H1 (cell line): ENCODE measurements at regions of chr5 and their contacts with region 1.

Region 1: DNA sequence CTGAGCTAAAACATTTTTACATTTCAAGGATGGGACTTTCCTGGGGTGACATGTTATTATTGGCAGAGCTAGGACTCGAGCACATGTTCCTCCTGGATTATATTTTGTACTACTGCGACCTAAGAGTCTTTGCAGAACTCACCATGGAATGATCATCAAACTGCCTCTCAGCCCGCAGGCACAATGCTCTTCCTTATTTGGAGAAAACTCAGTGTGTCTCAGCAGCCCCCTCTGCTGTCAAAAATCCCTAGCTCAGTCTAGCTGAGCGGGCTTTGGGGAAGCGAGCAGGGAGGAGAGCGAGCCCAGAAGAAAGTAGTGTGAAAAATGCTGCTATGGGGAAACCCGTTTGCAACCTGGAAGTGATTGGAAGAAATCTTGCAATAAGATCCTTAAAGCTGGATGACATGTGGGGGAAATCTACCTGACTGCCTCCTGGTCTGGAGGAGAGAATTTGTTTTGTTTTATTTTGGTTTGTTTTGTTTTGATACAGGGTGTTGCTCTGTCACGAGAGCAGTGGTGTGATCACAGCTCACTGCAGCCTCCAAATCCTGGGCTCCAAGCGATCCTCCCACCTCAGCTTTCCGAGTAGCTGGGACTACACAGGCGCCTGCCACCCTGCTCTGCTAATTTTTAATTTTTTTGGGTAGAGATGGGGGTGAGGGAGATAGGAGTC is 89.9 kb upstream of the CLINT1 start:
- DNase-seq: peak; percentile 85 to 93
- H3K4me3 ChIP-seq: no peak overlapping the region
- H3K27ac ChIP-seq: no peak overlapping the region; the same call in 1 of the 2 replicates
- H3K4me1 ChIP-seq: peaks cover 0 to 4% (median 1%) of the 10 kb centered on the region in 4 experiments; a peak in 4 of 7 replicates
- H3K27me3 ChIP-seq: no peaks in the 10 kb centered on the region
- CTCF ChIP-seq: peak; percentile 73 to 92 (median 78)
- EP300 ChIP-seq: peak in 1 of 2 experiments; percentile 90; a peak in 1 of 3 replicates
- POLR2A ChIP-seq: peak in 1 of 2 experiments; percentile 62; a peak in 2 of 3 replicates
- RAD21 ChIP-seq: peak; percentile 70 to 75

Region 2: GRCh38 chr5:157820593-157821252 is 128.2 kb before region 1 on chr5:
- CTCF ChIA-PET with region 1: interaction called, 13 read pairs
- POLR2A ChIA-PET with region 1: interaction called, 3 read pairs
- DNase-seq: no peak
- H3K4me3 ChIP-seq: no peak overlapping the region
- H3K27ac ChIP-seq: no peak overlapping the region
- H3K4me1 ChIP-seq: peaks cover 0 to 2% (median 0%) of the 10 kb centered on the region in 4 experiments; a peak in 2 of 7 replicates
- H3K27me3 ChIP-seq: no peaks in the 10 kb centered on the region
- CTCF ChIP-seq: peak in 2 of 3 experiments; percentile 7 to 35; a peak in 2 of 4 replicates
- EP300 ChIP-seq: no peak
- POLR2A ChIP-seq: no peak
- RAD21 ChIP-seq: peak; percentile 26 to 31; a peak in 3 of 4 replicates

Region 3: GRCh38 chr5:157917899-157918809 is 30.7 kb before region 1 on chr5:
- CTCF ChIA-PET with region 1: interaction called, 72 read pairs
- POLR2A ChIA-PET with region 1: no interaction called
- DNase-seq: peak; percentile 50 to 75
- H3K4me3 ChIP-seq: no peak overlapping the region
- H3K27ac ChIP-seq: no peak overlapping the region
- H3K4me1 ChIP-seq: peaks cover 0 to 10% (median 6%) of the 10 kb centered on the region in 4 experiments; a peak in 6 of 7 replicates
- H3K27me3 ChIP-seq: no peaks in the 10 kb centered on the region
- CTCF ChIP-seq: peak; percentile 57 to 83 (median 74)
- EP300 ChIP-seq: no peak
- POLR2A ChIP-seq: no peak
- RAD21 ChIP-seq: peak; percentile 73 to 80

Region 4: DNA sequence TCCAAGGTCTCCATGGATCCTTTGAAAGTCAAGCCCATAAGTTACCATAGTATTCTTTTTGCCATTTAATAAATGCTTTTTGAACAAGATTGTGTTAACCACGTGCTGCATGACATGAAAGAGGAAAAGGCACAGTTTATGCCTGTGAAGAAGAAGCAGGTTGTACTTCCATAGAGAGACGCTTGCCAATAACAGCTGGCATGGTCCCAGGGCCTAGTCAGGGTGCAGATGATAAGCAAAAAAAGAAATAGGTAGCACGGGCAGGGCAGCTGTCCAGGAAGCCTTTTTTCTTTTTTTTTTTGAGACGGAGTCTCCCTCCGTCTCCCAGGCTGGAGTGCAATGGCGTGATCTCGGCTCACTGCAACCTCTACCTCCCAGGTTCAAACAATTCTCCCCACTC is 18.2 kb before region 1 on chr5:
- CTCF ChIA-PET with region 1: interaction called, 25 read pairs
- POLR2A ChIA-PET with region 1: no interaction called
- DNase-seq: no peak
- H3K4me3 ChIP-seq: no peak overlapping the region
- H3K27ac ChIP-seq: no peak overlapping the region
- H3K4me1 ChIP-seq: peaks cover 2 to 10% (median 7%) of the 10 kb centered on the region in 4 experiments; a peak in 5 of 7 replicates
- H3K27me3 ChIP-seq: no peaks in the 10 kb centered on the region
- CTCF ChIP-seq: no peak
- EP300 ChIP-seq: no peak
- POLR2A ChIP-seq: no peak
- RAD21 ChIP-seq: no peak

Region 5: GRCh38 chr5:157971571-157972216 is 22.8 kb after region 1 on chr5:
- CTCF ChIA-PET with region 1: interaction called, 79 read pairs
- POLR2A ChIA-PET with region 1: interaction called, 10 read pairs
- DNase-seq: peak in 1 of 2 experiments; percentile 56
- H3K4me3 ChIP-seq: no peak overlapping the region
- H3K27ac ChIP-seq: no peak overlapping the region
- H3K4me1 ChIP-seq: peaks cover 0 to 11% (median 3%) of the 10 kb centered on the region in 4 experiments; a peak in 4 of 7 replicates
- H3K27me3 ChIP-seq: no peaks in the 10 kb centered on the region
- CTCF ChIP-seq: no peak
- EP300 ChIP-seq: no peak
- POLR2A ChIP-seq: no peak
- RAD21 ChIP-seq: no peak; a peak in 1 of 4 replicates